ENCODE measurements at regions of chr19 and their contacts with region 1.

Region 1: DNA sequence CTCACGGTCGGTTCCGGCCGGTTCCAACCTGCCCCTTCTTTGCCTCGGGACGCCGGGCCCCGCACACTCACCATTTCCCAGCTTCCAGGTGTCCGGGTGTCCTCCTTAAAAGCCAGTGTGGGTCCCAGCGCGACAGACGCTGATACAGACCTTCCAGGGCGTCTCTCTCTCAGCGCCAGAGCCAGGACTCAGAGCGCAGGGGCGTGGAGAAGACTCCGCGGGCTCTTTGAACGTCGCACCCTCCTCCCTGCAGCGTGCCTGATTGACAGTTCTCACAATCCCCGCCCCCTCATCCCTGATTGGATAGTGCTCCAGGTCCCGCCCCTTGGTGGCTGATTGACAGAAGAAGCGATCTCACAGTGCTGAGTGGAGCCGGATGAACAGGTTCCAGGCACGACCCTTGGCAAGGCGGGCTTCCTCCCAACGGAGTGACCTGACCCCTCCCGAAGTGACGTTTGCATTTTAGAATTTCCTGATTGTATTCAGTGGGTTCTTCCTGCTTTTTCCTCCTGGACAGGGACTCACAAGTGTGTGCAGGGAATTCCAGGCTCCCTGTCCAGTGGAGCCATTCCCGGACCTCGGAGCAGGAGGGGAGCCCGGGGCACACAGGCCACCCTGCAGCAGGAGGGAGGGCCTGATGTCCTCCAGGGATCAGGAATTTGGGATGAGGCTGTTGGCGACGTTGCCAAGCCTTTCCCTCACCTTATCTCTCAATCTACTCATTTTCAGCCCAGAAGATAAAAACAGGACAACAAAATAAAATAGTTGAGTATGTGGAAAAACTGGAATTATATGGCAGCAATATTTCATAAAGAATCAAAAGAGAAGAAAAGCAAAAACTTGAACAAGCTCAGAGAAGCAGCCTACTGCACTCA is at the start of gene ZNF823:
- DNase-seq: peak; percentile 98
- total RNA-seq, gene ZNF823: 2.3 TPM

Region 2: GRCh38 chr19:11766597-11767591 is 27.9 kb after region 1 on chr19 and contains the start of gene ZNF441:
- intact Hi-C with region 1: loop called (anchors 1 kb)
- DNase-seq: peak; percentile 99
- total RNA-seq, gene ZNF441: 5.8 TPM